ENCODE measurements at regions of chr20 and their contacts with region 1.

Region 1: GRCh38 chr20:19757487-19758132 is 448 bp upstream of the RIN2 start:
- DNase-seq: peak; percentile 92
- H3K4me3 ChIP-seq: peak overlapping the region; percentile 75 to 77 (median 76)
- H3K27ac ChIP-seq: peak overlapping the region; percentile 54
- H3K4me1 ChIP-seq: peaks cover 18% of the 10 kb centered on the region
- H3K27me3 ChIP-seq: no peaks in the 10 kb centered on the region
- CTCF ChIP-seq: no peak
- POLR2A ChIP-seq: peak; percentile 61

Region 2: DNA sequence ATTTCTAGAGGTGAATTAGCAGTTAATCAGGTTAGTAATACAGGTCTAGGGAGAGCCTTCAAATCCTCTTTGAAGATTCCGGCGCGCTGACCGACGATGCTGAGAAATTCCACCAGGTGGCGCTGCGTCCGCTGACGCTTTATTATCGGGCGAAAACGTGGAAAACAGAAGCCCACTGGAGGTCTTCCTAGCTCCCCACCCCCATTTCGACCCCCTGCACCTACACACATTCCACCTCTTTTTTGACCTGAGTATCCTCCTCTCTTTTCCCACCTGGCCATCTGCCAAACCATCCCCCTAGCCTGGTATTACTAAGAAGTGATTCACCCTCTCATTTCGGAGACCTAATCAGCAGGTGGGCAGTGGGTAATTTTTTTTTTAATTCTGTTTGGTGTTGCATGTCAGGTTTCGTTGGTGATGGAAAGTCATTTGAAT is 64.9 kb before region 1 on chr20:
- CTCF ChIA-PET with region 1: interaction called, 9 read pairs
- POLR2A ChIA-PET with region 1: no interaction called
- dilution Hi-C with region 1: no loop called
- intact Hi-C with region 1: loop called (anchors 1 kb)
- DNase-seq: peak; percentile 68
- H3K4me3 ChIP-seq: no peak overlapping the region
- H3K27ac ChIP-seq: no peak overlapping the region
- H3K4me1 ChIP-seq: peaks cover 5% of the 10 kb centered on the region
- H3K27me3 ChIP-seq: no peaks in the 10 kb centered on the region
- CTCF ChIP-seq: peak; percentile 84 to 87
- POLR2A ChIP-seq: no peak

Region 3: GRCh38 chr20:19791887-19792286 is 34.3 kb after region 1 on chr20:
- CTCF ChIA-PET with region 1: no interaction called
- POLR2A ChIA-PET with region 1: no interaction called
- dilution Hi-C with region 1: no loop called
- intact Hi-C with region 1: no loop called
- DNase-seq: no peak
- H3K4me3 ChIP-seq: no peak overlapping the region
- H3K27ac ChIP-seq: no peak overlapping the region
- H3K4me1 ChIP-seq: peaks cover 5% of the 10 kb centered on the region
- H3K27me3 ChIP-seq: no peaks in the 10 kb centered on the region
- CTCF ChIP-seq: no peak
- POLR2A ChIP-seq: no peak